Activated CD4-positive, alpha-beta T cell treated with anti-CD3 and anti-CD28 coated beads for 36 hours (primary cell): ENCODE measurements at regions of chr11 and their contacts with region 1.

Region 1: GRCh38 chr11:77091146-77091940 is 11.3 kb upstream of the OMP start:
- DNase-seq: peak; percentile 90
- ATAC-seq: peak; percentile 99
- H3K4me3 Mint-ChIP-seq: no peak overlapping the region
- H3K27ac Mint-ChIP-seq: no peak overlapping the region
- H3K4me1 Mint-ChIP-seq: peaks cover 4% of the 10 kb centered on the region
- H3K27me3 Mint-ChIP-seq: no peaks in the 10 kb centered on the region

Region 2: GRCh38 chr11:76807206-76807875 is 284.0 kb before region 1 on chr11:
- CTCF ChIA-PET with region 1: interaction called, 3 read pairs
- POLR2A ChIA-PET with region 1: no interaction called
- intact Hi-C with region 1: loop called in 1 of 2 experiments (anchors 1 kb)
- DNase-seq: peak; percentile 91
- ATAC-seq: peak; percentile 21
- H3K4me3 Mint-ChIP-seq: no peak overlapping the region
- H3K27ac Mint-ChIP-seq: no peak overlapping the region
- H3K4me1 Mint-ChIP-seq: peaks cover 31% of the 10 kb centered on the region
- H3K27me3 Mint-ChIP-seq: peaks cover 12% of the 10 kb centered on the region

Region 3: DNA sequence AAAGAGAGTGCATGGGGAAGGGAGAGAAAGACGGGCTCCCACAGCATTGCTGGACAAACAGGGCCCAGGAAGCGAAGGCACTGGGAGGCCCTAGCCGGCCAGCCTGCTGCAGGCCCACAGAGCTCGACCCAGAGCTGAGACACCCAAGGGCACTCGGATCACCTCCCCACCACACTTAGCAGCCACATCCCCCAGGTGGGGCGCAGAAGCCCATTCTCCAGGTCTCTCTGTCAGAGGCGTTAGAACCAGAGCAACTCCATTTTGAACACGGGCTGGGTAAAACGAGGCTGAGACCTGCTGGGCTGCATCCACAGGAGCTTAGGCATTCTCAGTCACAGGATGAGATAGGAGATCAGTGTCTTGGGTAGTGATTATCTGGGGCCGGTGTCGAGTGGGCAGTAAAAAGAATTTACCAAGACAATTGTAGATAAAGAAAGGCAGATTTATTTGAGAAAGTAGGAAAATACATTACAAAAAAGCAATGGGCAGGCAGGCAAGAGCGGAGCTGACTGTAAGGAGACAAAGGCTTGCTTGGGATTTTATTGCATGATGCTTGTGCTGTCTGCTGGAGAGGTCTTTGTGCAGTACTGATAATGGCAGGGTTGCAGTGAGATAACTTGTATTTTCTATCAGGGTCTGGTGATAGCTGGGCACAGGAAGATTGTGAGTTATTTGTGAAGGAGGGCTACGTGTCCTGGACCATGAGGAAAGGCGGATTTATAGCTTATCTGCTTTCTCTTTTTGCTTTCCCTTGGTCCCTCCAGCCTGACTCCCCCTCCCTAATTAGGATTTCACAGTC is 37.9 kb before region 1 on chr11:
- CTCF ChIA-PET with region 1: interaction called, 64 read pairs
- POLR2A ChIA-PET with region 1: no interaction called
- intact Hi-C with region 1: no loop called
- DNase-seq: no peak
- ATAC-seq: no peak
- H3K4me3 Mint-ChIP-seq: no peak overlapping the region
- H3K27ac Mint-ChIP-seq: peak overlapping the region; percentile 1
- H3K4me1 Mint-ChIP-seq: peaks cover 2% of the 10 kb centered on the region
- H3K27me3 Mint-ChIP-seq: no peaks in the 10 kb centered on the region

Region 4: GRCh38 chr11:77107950-77108349 is 16.6 kb after region 1 on chr11:
- CTCF ChIA-PET with region 1: interaction called, 19 read pairs
- POLR2A ChIA-PET with region 1: no interaction called
- intact Hi-C with region 1: no loop called
- DNase-seq: no peak
- ATAC-seq: no peak
- H3K4me3 Mint-ChIP-seq: no peak overlapping the region
- H3K27ac Mint-ChIP-seq: no peak overlapping the region
- H3K4me1 Mint-ChIP-seq: no peaks in the 10 kb centered on the region
- H3K27me3 Mint-ChIP-seq: no peaks in the 10 kb centered on the region